ENCODE measurements at regions of chr11 and their contacts with region 1.

Region 1: DNA sequence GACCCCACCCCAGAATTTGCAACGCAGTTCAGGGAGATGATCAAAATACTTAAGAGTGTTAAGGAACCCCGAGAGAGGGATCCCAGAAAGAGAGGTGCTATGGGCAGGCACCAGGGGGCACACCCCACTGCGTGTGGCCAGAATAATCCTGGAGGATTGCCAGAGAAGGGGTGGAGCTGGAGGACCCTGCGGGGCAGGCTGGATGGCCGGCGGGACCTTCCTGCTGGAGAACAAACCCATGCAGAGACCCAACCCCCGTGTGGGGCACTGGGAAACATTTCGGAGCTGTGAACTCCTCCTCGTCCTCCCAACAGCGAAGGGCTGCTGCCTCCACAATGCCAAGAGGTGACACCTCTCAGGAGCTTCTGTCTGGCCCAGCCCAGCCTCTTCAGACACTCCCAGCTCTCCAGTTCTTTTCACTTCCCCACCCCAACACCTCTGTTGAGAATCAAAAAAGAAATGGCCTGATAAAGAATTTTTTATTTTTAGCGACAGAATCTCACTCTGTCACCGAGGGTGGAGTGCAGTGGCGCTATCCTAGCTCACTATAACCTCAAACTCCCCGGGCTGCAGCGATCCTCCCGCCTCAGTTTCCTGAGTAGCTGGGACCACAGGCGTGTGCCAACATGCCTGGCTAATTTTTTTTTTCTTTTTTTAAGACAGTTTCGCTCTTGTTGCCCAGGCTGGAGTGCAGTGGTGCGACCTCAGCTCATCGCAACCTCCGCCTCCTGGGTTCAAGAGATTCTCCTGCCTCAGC is 25.6 kb downstream of the RHOD start:
- DNase-seq: peak in 1 of 2 experiments; percentile 75
- H3K4me3 ChIP-seq: no peak overlapping the region
- H3K27ac ChIP-seq: no peak overlapping the region
- H3K4me1 ChIP-seq: peaks cover 44% of the 10 kb centered on the region
- H3K27me3 ChIP-seq: no peaks in the 10 kb centered on the region
- CTCF ChIP-seq: no peak

Region 2: GRCh38 chr11:67118801-67119584 is 36.8 kb after region 1 on chr11 and contains the start of gene KDM2A:
- CTCF ChIA-PET with region 1: no interaction called
- POLR2A ChIA-PET with region 1: interaction called, 27 read pairs
- intact Hi-C with region 1: loop called (anchors 5 kb)
- DNase-seq: peak; percentile 91 to 98
- H3K4me3 ChIP-seq: peak within 1 kb of the TSS; percentile 83
- H3K27ac ChIP-seq: peak within 1 kb of the TSS; percentile 82
- H3K4me1 ChIP-seq: peaks cover 13% of the 10 kb centered on the region
- H3K27me3 ChIP-seq: no peaks in the 10 kb centered on the region
- CTCF ChIP-seq: no peak
- total RNA-seq, gene KDM2A: 117 and 120 TPM in 2 replicates

Region 3: DNA sequence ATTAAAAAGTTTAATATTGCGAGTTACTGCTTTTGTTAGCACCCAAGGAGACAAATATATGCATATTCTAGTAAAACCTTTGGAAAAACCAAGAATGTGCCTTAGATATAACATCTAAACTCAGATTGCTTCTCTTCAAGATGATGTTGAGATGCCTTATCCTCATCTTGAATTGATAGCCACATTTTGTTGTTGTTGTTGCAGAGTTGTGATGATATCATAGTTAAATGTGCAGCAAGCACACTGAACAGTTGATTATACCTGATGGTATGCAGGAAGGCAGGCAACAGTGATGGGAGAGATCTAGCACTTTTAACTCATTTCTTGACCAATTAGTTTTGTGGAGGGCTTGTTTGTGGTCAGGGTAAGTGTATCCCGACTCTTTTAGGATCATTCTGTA is 84.9 kb after region 1 on chr11:
- CTCF ChIA-PET with region 1: interaction called, 7 read pairs
- POLR2A ChIA-PET with region 1: no interaction called
- intact Hi-C with region 1: loop called (anchors 5 kb)
- DNase-seq: no peak
- H3K4me3 ChIP-seq: no peak overlapping the region
- H3K27ac ChIP-seq: peak overlapping the region; percentile 73
- H3K4me1 ChIP-seq: peaks cover 35% of the 10 kb centered on the region
- H3K27me3 ChIP-seq: no peaks in the 10 kb centered on the region
- CTCF ChIP-seq: no peak

Measured in PC-9 (cell line).